PC-3 (cell line): ENCODE measurements at regions of chr4 and their contacts with region 1.

Region 1: GRCh38 chr4:162347842-162348213 is 184.0 kb upstream of the FSTL5 start:
- DNase-seq: no peak
- ATAC-seq: no peak
- H3K4me3 ChIP-seq: no peak overlapping the region
- H3K27ac ChIP-seq: no peak overlapping the region
- H3K4me1 ChIP-seq: peaks cover 4% of the 10 kb centered on the region; the same call in 1 of the 2 replicates
- H3K27me3 ChIP-seq: no peaks in the 10 kb centered on the region
- CTCF ChIP-seq: no peak

Region 2: GRCh38 chr4:162461952-162462351 is 114.1 kb after region 1 on chr4:
- CTCF ChIA-PET with region 1: interaction called, 5 read pairs
- POLR2A ChIA-PET with region 1: no interaction called
- intact Hi-C with region 1: loop called (anchors 10 kb)
- DNase-seq: peak; percentile 25
- ATAC-seq: peak; percentile 66
- H3K4me3 ChIP-seq: no peak overlapping the region
- H3K27ac ChIP-seq: no peak overlapping the region
- H3K4me1 ChIP-seq: no peaks in the 10 kb centered on the region
- H3K27me3 ChIP-seq: no peaks in the 10 kb centered on the region
- CTCF ChIP-seq: peak; percentile 50